HEK293 (cell line): ENCODE measurements at regions of chr21 and their contacts with region 1.

Region 1: GRCh38 chr21:17482928-17483327 is 29.9 kb upstream of the CXADR start:
- H3K4me3 ChIP-seq: no peak overlapping the region
- H3K27ac ChIP-seq: no peak overlapping the region
- H3K4me1 ChIP-seq: no peaks in the 10 kb centered on the region
- CTCF ChIP-seq: no peak

Region 2: GRCh38 chr21:17467392-17467791 is 15.5 kb before region 1 on chr21:
- CTCF ChIA-PET with region 1: interaction called, 3 read pairs
- POLR2A ChIA-PET with region 1: interaction called, 11 read pairs
- H3K4me3 ChIP-seq: no peak overlapping the region
- H3K27ac ChIP-seq: peak overlapping the region; percentile 45; the same call in 1 of the 2 replicates
- H3K4me1 ChIP-seq: peaks cover 6% of the 10 kb centered on the region
- CTCF ChIP-seq: no peak

Region 3: GRCh38 chr21:17495680-17496079 is 12.8 kb after region 1 on chr21:
- CTCF ChIA-PET with region 1: interaction called, 12 read pairs
- POLR2A ChIA-PET with region 1: no interaction called
- H3K4me3 ChIP-seq: no peak overlapping the region
- H3K27ac ChIP-seq: no peak overlapping the region
- H3K4me1 ChIP-seq: peaks cover 20% of the 10 kb centered on the region
- CTCF ChIP-seq: no peak

Region 4: GRCh38 chr21:17780539-17780938 is 297.6 kb after region 1 on chr21:
- CTCF ChIA-PET with region 1: no interaction called
- POLR2A ChIA-PET with region 1: no interaction called
- H3K4me3 ChIP-seq: no peak overlapping the region
- H3K27ac ChIP-seq: no peak overlapping the region
- H3K4me1 ChIP-seq: peaks cover 7% of the 10 kb centered on the region; the same call in 1 of the 2 replicates
- CTCF ChIP-seq: no peak